ENCODE measurements at regions of chr17 and their contacts with region 1.

Region 1: DNA sequence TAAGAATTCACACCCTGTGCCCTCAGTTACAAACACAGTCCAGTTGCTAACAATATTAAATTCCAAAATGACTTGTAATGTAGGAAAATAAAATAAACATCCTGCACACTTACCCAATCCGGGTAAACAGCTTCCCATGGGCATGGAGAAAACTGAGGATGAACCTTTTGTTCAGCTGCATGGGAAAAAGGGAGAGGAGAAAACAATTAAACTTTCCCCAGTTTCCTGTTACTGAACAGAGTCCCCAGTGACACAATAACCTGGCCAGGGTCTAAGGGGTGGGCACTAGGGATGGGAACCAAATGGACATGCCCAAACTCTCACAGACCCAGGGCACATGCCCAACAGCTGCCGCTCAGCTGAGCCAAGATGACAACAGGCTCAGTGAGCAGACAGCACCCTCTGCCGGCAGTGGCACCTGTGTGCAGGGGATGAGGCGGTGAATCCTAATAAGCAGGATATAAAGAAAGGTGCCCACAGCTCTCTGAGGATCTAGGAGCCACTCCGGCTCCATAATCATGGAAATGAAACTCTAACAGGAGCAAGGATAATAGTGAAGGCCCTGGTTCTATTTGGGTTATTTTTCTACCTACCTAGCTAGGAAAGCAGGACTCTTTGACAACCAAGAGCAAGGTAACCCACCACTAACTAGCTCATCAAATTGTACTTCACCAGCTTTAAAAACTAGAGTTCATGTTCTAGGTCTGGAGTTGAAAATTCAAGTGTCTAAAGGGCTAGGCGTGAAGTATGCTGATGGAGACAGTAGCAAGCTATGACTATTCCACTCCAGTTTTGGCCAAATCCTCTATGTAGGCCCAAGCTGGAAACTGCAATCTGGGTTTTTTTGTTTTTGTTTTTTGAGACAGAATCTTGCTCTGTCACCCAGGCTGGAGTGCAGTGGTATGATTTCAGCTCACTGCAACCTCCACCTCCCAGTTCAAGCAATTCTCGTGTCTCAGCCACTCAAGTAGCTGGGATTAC is 58.8 kb downstream of the SMG6 start:
- DNase-seq: peak; percentile 57
- ATAC-seq: peak; percentile 97
- H3K4me3 ChIP-seq: no peak overlapping the region
- H3K27ac ChIP-seq: no peak overlapping the region
- H3K4me1 ChIP-seq: peaks cover 9% of the 10 kb centered on the region
- H3K27me3 ChIP-seq: no peaks in the 10 kb centered on the region
- CTCF ChIP-seq: peak; percentile 97

Region 2: DNA sequence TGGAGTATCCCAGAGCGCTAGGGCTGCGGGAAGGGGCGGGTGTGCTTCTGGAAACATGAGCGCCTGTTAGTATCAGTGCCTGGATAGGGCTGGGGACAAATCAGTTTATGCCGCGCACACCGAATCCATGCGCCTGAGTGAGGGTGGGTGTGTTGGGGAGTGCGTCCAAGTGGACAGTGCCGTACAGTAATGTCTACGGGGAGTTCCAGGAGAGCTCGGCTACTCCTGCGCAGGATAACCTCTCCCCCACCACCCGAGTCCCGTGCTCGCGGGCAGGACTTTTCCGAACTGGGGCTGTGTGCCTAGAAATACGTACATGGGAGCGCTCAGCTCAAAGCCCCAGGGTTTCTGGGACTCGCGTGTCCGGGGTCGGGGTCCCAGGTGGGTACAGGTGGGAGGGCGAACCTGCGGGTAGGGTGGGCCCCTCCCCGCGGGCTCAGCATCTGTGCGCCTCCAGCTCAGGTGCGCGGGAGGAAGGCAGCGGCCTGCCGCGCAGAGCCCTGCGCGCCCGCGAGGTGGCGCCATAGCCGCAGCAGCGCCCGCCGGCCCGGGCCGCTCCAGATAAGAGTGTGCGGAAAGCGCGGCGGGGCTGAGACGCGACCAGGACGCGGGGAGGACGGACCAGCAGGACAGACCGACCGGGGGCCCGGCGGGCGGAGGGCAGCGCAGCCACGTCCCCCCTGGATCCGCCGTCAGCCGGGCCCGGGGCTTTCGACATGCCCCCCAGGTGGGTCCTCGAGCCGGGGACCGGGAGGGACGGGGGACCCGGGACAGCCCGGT is 190.1 kb before region 1 on chr17 and contains the start of gene HIC1:
- CTCF ChIA-PET with region 1: interaction called, 17 read pairs
- POLR2A ChIA-PET with region 1: interaction called, 4 read pairs
- in situ Hi-C with region 1: no loop called
- intact Hi-C with region 1: loop called (anchors 2 kb)
- DNase-seq: no peak
- ATAC-seq: peak; percentile 77
- H3K4me3 ChIP-seq: peak within 1 kb of the TSS; percentile 46 to 62
- H3K27ac ChIP-seq: no peak within 1 kb of the TSS
- H3K4me1 ChIP-seq: no peaks in the 10 kb centered on the region
- H3K27me3 ChIP-seq: no peaks in the 10 kb centered on the region
- CTCF ChIP-seq: peak; percentile 95
- total RNA-seq, gene HIC1: 1.4 TPM

Region 3: DNA sequence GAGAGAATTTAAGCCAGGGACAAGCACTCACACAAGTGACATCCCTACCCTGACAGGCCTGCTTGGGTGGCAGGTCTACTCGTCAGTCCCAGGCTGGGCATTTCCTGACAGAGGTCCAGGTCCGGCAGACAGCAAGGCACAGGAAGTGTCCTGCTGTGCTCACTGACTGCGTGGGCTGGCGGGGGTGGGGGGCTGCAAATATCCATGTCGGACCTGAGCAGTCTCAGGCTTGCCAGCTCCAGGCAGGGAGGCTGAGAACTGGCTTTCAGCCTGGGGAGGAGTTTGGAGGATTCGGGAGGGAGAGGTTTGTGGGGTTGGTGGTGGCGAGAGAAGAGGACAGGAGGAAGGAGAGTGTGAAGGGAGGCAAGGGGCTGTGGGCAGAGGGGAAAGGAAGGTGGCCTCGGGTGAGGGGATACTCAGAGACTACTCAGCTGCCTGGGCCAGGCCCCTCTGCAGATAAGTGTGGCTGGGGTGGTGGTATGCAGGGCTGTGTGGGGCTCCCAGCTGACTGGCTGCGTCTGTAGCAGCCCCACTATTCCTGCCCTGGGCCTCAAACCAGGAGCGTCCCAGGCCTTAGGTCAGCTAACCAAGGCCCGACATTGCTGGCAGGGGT is 182.2 kb before region 1 on chr17:
- CTCF ChIA-PET with region 1: interaction called, 3 read pairs
- POLR2A ChIA-PET with region 1: no interaction called
- in situ Hi-C with region 1: no loop called
- intact Hi-C with region 1: loop called (anchors 2 kb)
- DNase-seq: no peak
- ATAC-seq: no peak
- H3K4me3 ChIP-seq: no peak overlapping the region
- H3K27ac ChIP-seq: no peak overlapping the region
- H3K4me1 ChIP-seq: no peaks in the 10 kb centered on the region
- H3K27me3 ChIP-seq: no peaks in the 10 kb centered on the region
- CTCF ChIP-seq: no peak